ENCODE measurements at regions of chr3 and their contacts with region 1.

Region 1: GRCh38 chr3:6315906-6316305 is 545.0 kb upstream of the GRM7 start:
- DNase-seq: no peak

Region 2: DNA sequence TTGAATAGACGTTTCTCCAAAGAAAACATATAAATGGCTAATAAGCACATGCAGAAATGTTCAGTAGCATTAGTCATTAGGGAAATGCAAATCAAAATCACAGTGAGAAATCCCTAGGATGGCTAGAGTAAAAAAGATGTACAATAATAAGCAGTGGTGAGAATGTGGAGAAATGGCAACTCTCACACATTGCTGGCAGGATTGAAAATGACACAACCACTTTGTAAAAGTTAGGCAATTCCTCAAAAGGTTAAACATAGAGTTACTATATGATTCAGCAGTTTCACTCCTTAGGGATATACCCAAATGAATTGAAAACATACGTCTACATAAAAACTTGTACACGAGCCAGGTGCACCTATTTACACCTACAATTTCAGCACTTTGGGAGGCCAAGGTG is 1714.0 kb before region 1 on chr3:
- intact Hi-C with region 1: no loop called
- DNase-seq: no peak

Region 3: GRCh38 chr3:6248528-6248927 is 67.4 kb before region 1 on chr3:
- intact Hi-C with region 1: no loop called
- DNase-seq: no peak

Region 4: DNA sequence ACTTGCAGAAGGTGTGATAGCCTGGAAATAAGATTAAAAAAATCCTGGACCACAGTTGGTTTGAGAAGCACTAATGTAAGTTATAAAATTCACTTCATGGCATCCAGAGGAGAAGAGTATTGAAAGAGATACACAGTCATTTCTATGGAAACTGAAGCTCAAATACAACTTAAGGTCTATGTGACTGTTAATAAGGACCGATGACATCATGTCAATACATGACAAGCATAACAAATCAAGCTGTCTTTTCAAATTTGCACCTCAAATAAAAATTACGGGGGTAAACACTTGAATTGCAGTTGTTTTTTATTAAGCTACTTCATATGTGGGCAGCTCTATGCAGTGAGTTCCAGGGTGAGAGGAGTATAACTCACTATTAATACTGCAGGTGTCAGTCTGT is 69.8 kb after region 1 on chr3:
- intact Hi-C with region 1: loop called in 1 of 2 experiments (anchors 2 kb)
- DNase-seq: no peak